ENCODE measurements at regions of chr1 and their contacts with region 1.

Region 1: DNA sequence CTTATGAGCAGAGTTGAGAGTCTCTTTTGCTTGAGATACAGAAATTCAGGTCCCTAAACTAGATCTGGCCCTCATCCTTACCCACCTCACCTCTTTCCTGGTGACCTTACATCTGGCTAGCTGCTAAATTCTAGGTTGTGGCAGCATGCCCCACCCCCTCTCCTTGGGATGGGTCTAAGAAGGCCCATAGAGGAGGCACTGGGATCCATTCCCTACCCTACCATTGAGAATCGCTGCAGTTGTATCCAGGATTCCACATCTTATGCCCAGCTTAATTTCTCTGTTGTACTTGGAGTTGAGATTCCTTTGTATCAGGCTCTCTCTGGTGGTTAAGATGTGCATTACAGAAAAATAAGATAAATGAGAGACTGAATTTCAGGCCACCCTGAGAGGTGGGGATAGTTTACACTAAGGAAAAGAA is 9.5 kb upstream of the TMEM39B start:
- DNase-seq: peak; percentile 40 to 63 (median 55)
- ATAC-seq: peak; percentile 72
- H3K4me3 ChIP-seq: no peak overlapping the region
- H3K27ac ChIP-seq: no peak overlapping the region
- H3K4me1 ChIP-seq: peaks cover 15 to 27% of the 10 kb centered on the region in 2 experiments
- H3K27me3 ChIP-seq: no peaks in the 10 kb centered on the region
- CTCF ChIP-seq: peak; percentile 60 to 88 (median 76); a peak in 5 of 6 replicates
- EP300 ChIP-seq: no peak
- POLR2A ChIP-seq: 0 out of 2 replicates have a peak, but pooled peaks have one; percentile 54
- RAD21 ChIP-seq: peak; percentile 79 to 86

Region 2: GRCh38 chr1:31789259-31790065 is 273.8 kb before region 1 on chr1:
- CTCF ChIA-PET with region 1: no interaction called
- POLR2A ChIA-PET with region 1: no interaction called
- in situ Hi-C with region 1: no loop called
- intact Hi-C with region 1: loop called (anchors 10 kb)
- DNase-seq: peak; percentile 95 to 99 (median 98)
- ATAC-seq: peak; percentile 91
- H3K4me3 ChIP-seq: peak overlapping the region; percentile 57
- H3K27ac ChIP-seq: no peak overlapping the region
- H3K4me1 ChIP-seq: peaks cover 9 to 29% of the 10 kb centered on the region in 2 experiments; a peak in 4 of 5 replicates
- H3K27me3 ChIP-seq: peaks cover 16 to 44% of the 10 kb centered on the region in 2 experiments
- CTCF ChIP-seq: peak; percentile 92 to 99 (median 99)
- EP300 ChIP-seq: peak; percentile 19; the same call in 1 of the 2 replicates
- POLR2A ChIP-seq: no peak
- RAD21 ChIP-seq: peak; percentile 98

Region 3: DNA sequence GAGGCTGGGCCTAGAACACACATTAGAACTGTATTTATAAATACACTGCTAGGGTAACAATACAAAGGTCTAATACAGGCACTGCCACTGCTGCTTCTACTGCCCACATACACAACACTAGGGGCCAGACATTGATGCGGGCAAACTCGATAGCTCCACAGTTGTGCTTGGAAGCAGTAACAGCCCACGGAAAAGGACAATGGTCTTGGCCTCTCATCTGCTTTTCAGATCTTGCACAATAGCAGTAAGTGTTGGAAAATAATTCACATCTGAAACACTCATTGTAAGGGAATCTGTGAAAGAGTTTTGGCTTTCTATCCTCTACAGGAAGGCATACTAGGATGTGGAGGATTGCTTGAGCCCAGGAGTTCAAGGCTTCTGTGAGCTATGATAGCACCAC is 240.5 kb before region 1 on chr1:
- CTCF ChIA-PET with region 1: no interaction called
- POLR2A ChIA-PET with region 1: no interaction called
- in situ Hi-C with region 1: loop called (anchors 10 kb)
- intact Hi-C with region 1: loop called (anchors 10 kb)
- DNase-seq: no peak
- ATAC-seq: no peak
- H3K4me3 ChIP-seq: no peak overlapping the region
- H3K27ac ChIP-seq: no peak overlapping the region
- H3K4me1 ChIP-seq: peaks cover 14 to 16% of the 10 kb centered on the region in 2 experiments; a peak in 4 of 5 replicates
- H3K27me3 ChIP-seq: no peaks in the 10 kb centered on the region
- CTCF ChIP-seq: no peak
- EP300 ChIP-seq: no peak
- POLR2A ChIP-seq: no peak
- RAD21 ChIP-seq: no peak

Region 4: DNA sequence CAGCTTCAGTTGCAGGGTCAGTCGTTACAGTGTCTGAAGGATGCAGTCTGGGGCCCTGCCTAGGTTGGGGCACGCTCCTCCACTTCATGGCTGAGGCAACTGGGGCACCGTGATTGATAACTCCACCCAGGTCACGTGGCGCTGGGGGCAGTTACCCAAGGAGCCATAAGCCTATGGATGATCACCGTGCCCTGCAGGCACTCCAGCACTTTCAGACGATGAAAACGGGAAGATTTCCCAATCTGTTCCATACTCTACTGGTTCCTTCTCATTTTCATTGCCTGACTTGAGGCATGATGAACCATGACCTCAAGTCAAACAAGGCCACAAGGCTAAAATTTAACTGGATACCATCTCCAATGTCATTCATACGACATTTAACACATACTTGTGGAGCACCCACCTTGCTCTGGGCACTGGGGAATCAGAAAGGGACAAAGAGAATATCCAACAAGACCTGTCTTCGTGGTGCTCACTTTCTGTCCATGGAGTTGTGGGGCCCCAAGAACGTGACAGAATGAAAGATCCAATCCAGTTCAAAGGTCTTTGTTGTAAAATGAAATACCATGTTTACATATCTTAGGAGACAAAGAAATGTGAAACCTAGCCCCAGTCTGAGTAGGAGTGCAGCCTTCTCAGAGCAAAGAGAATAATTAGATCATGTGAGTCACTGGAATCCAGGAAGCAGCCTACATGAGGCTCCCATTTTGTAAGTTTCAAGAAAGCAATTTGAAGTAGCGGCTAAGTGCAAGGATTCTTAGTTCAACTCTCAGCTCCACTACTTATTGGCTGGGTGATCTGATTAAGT is 208.0 kb before region 1 on chr1:
- CTCF ChIA-PET with region 1: no interaction called
- POLR2A ChIA-PET with region 1: no interaction called
- in situ Hi-C with region 1: no loop called
- intact Hi-C with region 1: no loop called
- DNase-seq: peak in 1 of 4 experiments; percentile 26
- ATAC-seq: peak; percentile 59
- H3K4me3 ChIP-seq: no peak overlapping the region
- H3K27ac ChIP-seq: peak overlapping the region; percentile 9; the same call in 1 of the 3 replicates
- H3K4me1 ChIP-seq: peaks cover 0 to 10% of the 10 kb centered on the region in 2 experiments; a peak in 3 of 5 replicates
- H3K27me3 ChIP-seq: no peaks in the 10 kb centered on the region; a peak in 1 of 5 replicates
- CTCF ChIP-seq: no peak
- EP300 ChIP-seq: no peak
- POLR2A ChIP-seq: no peak
- RAD21 ChIP-seq: no peak

Region 5: DNA sequence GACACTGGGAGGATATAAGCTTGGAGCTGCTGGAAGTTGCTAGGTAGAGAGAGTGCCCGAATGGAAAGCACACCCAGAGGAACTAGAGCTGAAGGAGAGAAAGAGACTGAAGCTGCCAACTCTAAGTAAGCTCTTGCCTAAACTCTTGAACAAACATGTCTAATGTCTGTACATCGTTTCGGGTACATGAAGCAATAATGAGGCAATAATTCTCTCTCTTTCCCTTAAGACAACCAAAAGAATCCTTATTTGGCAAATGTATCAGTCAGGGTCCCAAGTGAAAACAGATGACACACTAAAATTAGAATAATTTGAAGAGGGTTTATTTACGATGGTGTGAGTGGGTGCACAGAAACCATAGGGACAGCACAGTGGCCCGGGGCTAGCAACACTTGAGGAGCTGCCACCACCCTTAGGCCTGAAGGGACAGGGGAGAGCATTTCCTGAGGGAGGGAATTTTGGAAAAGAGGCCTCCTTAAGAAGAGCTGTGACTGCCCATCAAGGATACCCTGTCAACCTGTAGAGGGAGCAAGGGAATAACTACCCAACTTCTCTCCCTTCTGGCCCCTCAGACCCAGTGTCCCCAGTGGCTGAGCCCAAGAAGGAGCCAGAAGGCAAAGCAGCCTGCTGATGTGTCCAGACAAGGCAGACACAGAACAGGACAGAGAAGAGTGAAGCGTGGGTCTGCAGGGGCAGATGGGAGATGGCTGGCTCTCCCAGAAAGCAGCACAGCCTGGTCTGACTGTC is 85.7 kb before region 1 on chr1:
- CTCF ChIA-PET with region 1: interaction called, 6 read pairs
- POLR2A ChIA-PET with region 1: interaction called, 6 read pairs
- in situ Hi-C with region 1: loop called (anchors 5 kb)
- intact Hi-C with region 1: loop called (anchors 1 kb)
- DNase-seq: peak; percentile 68 to 80 (median 76)
- ATAC-seq: peak; percentile 97
- H3K4me3 ChIP-seq: no peak overlapping the region
- H3K27ac ChIP-seq: no peak overlapping the region
- H3K4me1 ChIP-seq: peaks cover 0 to 5% of the 10 kb centered on the region in 2 experiments; a peak in 2 of 5 replicates
- H3K27me3 ChIP-seq: no peaks in the 10 kb centered on the region
- CTCF ChIP-seq: peak; percentile 84 to 97 (median 95)
- EP300 ChIP-seq: no peak
- POLR2A ChIP-seq: no peak
- RAD21 ChIP-seq: peak; percentile 59 to 84

Region 6: DNA sequence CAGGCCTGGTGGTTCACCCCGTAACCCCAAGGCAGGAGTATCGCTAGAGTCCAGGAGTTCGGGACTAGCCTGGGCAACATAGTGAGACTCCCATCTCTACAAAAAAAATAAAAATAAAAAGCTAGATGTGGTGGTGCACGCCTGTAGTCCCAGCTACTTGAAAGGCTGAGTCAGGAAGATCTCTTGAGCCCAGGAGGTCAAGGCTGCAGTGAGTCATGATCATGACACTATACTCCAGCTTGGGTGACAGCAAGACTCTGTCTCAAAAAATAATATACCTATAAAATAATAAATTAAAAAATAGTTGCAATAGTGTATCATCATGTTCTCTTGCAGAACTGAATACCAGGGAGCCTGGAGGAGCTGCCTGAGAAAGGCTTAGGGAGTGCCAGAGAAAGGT is 10.4 kb before region 1 on chr1:
- CTCF ChIA-PET with region 1: no interaction called
- POLR2A ChIA-PET with region 1: interaction called, 14 read pairs
- in situ Hi-C with region 1: no loop called
- intact Hi-C with region 1: no loop called
- DNase-seq: no peak
- ATAC-seq: no peak
- H3K4me3 ChIP-seq: no peak overlapping the region
- H3K27ac ChIP-seq: no peak overlapping the region
- H3K4me1 ChIP-seq: no peaks in the 10 kb centered on the region
- H3K27me3 ChIP-seq: no peaks in the 10 kb centered on the region
- CTCF ChIP-seq: no peak
- EP300 ChIP-seq: no peak
- POLR2A ChIP-seq: no peak
- RAD21 ChIP-seq: no peak

Measured in K562 (cell line).